Cardiac septum (tissue), 1 donor: ENCODE measurements at regions of chr11 and their contacts with region 1.

Region 1: GRCh38 chr11:124961972-124962609 is 8.1 kb downstream of the CCDC15 start:
- DNase-seq: no peak

Region 2: GRCh38 chr11:124900464-124900863 is 61.6 kb before region 1 on chr11:
- intact Hi-C with region 1: no loop called
- DNase-seq: no peak

Region 3: DNA sequence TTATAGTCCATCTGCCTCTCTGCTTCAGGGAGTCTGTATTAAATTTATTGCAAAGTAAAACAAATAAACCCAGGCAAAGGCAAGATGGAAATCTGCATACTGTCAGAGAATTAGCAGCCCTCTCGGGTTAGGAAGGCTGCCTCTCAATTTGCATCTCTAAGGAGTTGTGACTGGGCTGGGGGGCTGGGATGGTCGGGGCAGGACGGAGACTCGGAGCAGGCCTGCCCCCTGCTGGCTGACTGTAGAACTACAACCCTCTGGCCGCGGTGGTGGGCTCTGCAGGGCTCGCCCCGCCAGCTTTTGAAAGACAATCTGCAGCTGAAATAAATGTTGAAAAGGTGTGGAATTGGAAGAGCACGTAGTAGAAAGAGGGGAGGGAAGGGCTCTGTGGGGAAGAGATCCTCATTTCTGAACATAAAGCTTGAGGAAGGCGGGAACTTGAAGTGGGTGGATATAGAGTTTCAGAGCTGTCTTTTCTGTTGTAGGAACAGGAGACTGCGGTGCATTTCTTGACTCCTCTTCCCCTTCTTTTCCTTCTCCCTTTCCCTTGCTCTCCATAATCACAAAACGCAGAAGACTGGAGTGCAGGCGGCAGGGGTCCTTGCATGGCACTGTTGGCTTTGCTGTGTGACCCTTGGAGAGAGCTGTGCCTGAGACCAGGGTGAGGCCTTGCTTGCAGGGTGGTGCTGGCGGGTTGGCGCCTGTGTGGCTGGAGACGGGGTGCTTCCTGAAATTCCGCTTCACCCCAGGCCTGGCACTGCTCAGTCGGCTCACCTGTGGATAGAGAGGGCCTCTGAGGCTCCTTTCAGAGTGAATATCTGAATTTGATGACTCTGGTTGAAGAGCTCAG is 179.8 kb after region 1 on chr11:
- intact Hi-C with region 1: loop called (anchors 2 kb)
- DNase-seq: no peak

Region 4: GRCh38 chr11:125164422-125165110 is 202.5 kb after region 1 on chr11 and contains the start of gene PKNOX2:
- intact Hi-C with region 1: no loop called
- DNase-seq: peak; percentile 84
- total RNA-seq, gene PKNOX2: 7.1 TPM